ENCODE measurements at regions of chr16 and their contacts with region 1.

Region 1: DNA sequence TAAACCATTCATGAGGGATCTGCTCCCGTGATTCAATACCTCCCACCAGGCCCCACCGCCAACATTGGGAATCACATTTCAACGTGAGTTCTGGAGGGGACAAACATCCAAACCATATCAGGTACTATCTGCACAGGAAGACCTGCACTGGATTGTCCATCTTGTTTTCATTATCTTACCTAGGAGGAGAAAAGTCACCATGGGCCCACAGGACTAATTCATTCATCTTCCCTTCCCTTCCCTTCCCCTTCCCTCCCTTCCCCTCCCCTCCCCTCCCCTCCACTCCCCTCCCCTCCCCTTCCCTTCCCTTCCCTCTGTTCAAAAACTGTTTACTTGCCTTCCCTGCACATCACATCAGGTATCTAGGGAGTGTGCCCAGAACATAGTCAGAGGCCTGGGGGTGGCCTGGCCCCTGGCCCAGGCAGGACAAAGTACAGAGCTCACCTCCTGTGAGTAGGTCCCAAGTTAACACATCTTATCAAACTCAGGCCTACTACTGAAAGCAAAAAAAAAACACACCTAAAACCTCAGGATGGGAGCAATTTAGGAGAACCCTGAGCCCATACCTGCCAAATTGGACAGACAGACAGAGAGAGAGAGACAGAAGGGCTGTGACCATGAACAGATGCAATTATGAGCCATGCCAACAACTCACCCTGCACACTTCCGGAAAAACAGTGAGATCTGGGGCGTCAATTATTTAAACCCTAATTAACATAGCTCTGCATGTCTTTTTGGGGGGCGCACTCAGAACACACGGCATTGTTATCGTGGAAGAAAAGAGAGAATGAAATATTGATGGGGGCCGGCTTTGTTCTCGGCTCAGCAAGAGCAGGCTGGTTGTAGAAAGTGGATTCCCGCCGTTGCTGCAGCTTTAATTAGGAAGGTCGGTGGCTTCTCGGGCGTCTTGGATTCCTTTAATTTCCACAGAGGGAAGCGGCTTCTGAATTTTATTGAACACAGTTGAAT is 151.2 kb downstream of the IRX5 start:
- DNase-seq: no peak
- ATAC-seq: no peak
- H3K4me3 ChIP-seq: no peak overlapping the region
- H3K27ac ChIP-seq: no peak overlapping the region
- H3K4me1 ChIP-seq: no peaks in the 10 kb centered on the region
- H3K27me3 ChIP-seq: no peaks in the 10 kb centered on the region
- CTCF ChIP-seq: no peak
- POLR2A ChIP-seq: no peak
- RAD21 ChIP-seq: no peak

Region 2: GRCh38 chr16:55138298-55138697 is 56.4 kb after region 1 on chr16:
- CTCF ChIA-PET with region 1: interaction called, 10 read pairs
- POLR2A ChIA-PET with region 1: no interaction called
- dilution Hi-C with region 1: no loop called
- in situ Hi-C with region 1: no loop called
- intact Hi-C with region 1: no loop called
- DNase-seq: no peak
- ATAC-seq: no peak
- H3K4me3 ChIP-seq: no peak overlapping the region
- H3K27ac ChIP-seq: no peak overlapping the region
- H3K4me1 ChIP-seq: no peaks in the 10 kb centered on the region
- H3K27me3 ChIP-seq: no peaks in the 10 kb centered on the region
- CTCF ChIP-seq: no peak
- POLR2A ChIP-seq: no peak
- RAD21 ChIP-seq: no peak